Adrenal gland (tissue), 19 donors: ENCODE measurements at regions of chr9 and their contacts with region 1.

Region 1: GRCh38 chr9:26579056-26579455 is 313.5 kb downstream of the CAAP1 start:
- DNase-seq: no peak
- H3K4me3 ChIP-seq: no peak overlapping the region
- H3K27ac ChIP-seq: no peak overlapping the region
- H3K4me1 ChIP-seq: no peaks in the 10 kb centered on the region
- H3K27me3 ChIP-seq: no peaks in the 10 kb centered on the region
- CTCF ChIP-seq: no peak
- POLR2A ChIP-seq: no peak

Region 2: GRCh38 chr9:26637101-26637500 is 58.0 kb after region 1 on chr9:
- intact Hi-C with region 1: loop called in 1 of 2 experiments (anchors 10 kb)
- DNase-seq: no peak
- H3K4me3 ChIP-seq: no peak overlapping the region
- H3K27ac ChIP-seq: no peak overlapping the region
- H3K4me1 ChIP-seq: no peaks in the 10 kb centered on the region
- H3K27me3 ChIP-seq: no peaks in the 10 kb centered on the region
- CTCF ChIP-seq: no peak
- POLR2A ChIP-seq: no peak